Endothelial cell of umbilical vein (primary cell): ENCODE measurements at regions of chr12 and their contacts with region 1.

Region 1: GRCh38 chr12:89352492-89353187 is at the start of gene DUSP6:
- DNase-seq: peak; percentile 100
- H3K4me3 ChIP-seq: peak within 1 kb of the TSS; percentile 72 to 97 (median 90)
- H3K27ac ChIP-seq: peak within 1 kb of the TSS; percentile 88
- H3K4me1 ChIP-seq: peaks cover 37% of the 10 kb centered on the region
- H3K27me3 ChIP-seq: no peaks in the 10 kb centered on the region
- CTCF ChIP-seq: no peak
- POLR2A ChIP-seq: no peak
- total RNA-seq, gene DUSP6: 148 and 200 TPM in 2 replicates

Region 2: GRCh38 chr12:88946372-88946997 is 406.2 kb before region 1 on chr12:
- CTCF ChIA-PET with region 1: no interaction called
- POLR2A ChIA-PET with region 1: no interaction called
- dilution Hi-C with region 1: no loop called
- intact Hi-C with region 1: loop called (anchors 5 kb)
- DNase-seq: peak; percentile 89
- H3K4me3 ChIP-seq: no peak overlapping the region
- H3K27ac ChIP-seq: peak overlapping the region; percentile 92
- H3K4me1 ChIP-seq: peaks cover 42% of the 10 kb centered on the region
- H3K27me3 ChIP-seq: no peaks in the 10 kb centered on the region
- CTCF ChIP-seq: no peak
- POLR2A ChIP-seq: no peak

Region 3: DNA sequence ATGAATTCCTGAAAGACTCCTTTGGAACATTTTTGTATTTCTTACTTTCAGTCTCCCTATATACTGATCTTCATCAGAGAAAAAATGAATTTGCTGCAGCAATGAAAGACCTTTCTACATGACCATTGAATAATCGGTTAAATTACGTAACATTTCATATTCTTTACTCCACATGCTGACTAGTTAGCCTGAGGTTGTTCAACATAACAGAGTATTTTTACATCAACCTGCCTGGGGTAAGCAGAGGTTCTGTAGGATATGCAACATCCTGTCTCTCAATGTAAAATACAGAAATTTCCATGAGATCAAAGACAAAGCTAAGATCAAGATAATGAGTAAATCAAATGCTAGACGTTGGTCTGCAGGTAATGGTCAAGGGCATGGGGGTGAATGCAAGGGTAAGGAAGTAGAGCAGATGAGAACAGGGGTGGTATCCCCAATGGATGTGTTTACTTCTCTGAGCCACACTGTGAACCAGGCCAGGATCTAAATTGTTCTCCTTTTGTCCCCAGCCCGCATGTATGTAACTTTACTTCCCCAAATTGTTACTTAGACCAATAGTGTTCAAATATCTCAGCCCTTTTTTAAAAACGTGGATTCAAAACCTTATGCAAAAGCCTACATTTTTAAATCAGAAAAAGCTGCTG is 45.7 kb before region 1 on chr12:
- CTCF ChIA-PET with region 1: no interaction called
- POLR2A ChIA-PET with region 1: no interaction called
- dilution Hi-C with region 1: no loop called
- intact Hi-C with region 1: no loop called
- DNase-seq: no peak
- H3K4me3 ChIP-seq: no peak overlapping the region
- H3K27ac ChIP-seq: no peak overlapping the region
- H3K4me1 ChIP-seq: no peaks in the 10 kb centered on the region
- H3K27me3 ChIP-seq: no peaks in the 10 kb centered on the region
- CTCF ChIP-seq: no peak
- POLR2A ChIP-seq: no peak

Region 4: DNA sequence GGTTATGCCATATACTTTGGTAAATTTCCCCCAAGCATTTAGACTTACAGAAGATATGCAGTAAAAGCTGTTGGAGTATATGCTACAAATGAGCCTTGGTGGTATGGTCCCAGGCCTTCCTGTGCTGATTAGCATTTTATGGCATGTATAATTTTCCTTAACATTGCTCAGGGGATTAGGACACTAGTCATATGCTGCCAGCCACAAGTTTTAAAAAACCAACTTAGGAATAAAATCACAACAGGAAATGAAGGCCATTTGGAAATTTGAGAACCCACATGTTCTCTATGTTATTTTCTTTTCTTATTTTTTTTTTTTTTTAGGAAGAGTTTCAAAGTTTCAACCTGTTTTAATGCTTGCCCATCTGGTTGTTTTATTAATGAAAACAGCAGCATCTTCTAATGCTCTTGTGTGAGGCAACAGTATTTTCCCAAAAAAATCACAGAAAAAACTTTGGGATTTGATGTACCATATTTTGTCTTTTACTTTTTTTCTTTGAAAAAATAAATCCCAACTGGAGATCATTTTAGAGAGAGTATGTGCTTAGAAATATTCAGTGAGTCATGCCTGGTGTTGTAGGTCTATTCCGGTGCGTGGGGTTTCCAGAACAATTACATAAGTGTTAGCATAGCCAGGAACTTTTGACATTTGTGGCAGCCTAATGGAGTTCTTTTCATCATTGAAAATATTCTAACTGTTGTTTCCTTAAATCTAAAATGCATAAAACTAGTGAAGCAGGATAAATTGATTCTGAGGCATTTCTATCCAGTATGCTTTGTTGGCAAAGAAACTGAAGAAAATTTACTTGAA is 21.3 kb after region 1 on chr12:
- CTCF ChIA-PET with region 1: interaction called, 49 read pairs
- POLR2A ChIA-PET with region 1: interaction called, 9 read pairs
- dilution Hi-C with region 1: no loop called
- intact Hi-C with region 1: loop called (anchors 1 kb)
- DNase-seq: peak; percentile 90
- H3K4me3 ChIP-seq: no peak overlapping the region
- H3K27ac ChIP-seq: peak overlapping the region; percentile 90
- H3K4me1 ChIP-seq: peaks cover 78% of the 10 kb centered on the region
- H3K27me3 ChIP-seq: no peaks in the 10 kb centered on the region
- CTCF ChIP-seq: no peak
- POLR2A ChIP-seq: no peak

Region 5: DNA sequence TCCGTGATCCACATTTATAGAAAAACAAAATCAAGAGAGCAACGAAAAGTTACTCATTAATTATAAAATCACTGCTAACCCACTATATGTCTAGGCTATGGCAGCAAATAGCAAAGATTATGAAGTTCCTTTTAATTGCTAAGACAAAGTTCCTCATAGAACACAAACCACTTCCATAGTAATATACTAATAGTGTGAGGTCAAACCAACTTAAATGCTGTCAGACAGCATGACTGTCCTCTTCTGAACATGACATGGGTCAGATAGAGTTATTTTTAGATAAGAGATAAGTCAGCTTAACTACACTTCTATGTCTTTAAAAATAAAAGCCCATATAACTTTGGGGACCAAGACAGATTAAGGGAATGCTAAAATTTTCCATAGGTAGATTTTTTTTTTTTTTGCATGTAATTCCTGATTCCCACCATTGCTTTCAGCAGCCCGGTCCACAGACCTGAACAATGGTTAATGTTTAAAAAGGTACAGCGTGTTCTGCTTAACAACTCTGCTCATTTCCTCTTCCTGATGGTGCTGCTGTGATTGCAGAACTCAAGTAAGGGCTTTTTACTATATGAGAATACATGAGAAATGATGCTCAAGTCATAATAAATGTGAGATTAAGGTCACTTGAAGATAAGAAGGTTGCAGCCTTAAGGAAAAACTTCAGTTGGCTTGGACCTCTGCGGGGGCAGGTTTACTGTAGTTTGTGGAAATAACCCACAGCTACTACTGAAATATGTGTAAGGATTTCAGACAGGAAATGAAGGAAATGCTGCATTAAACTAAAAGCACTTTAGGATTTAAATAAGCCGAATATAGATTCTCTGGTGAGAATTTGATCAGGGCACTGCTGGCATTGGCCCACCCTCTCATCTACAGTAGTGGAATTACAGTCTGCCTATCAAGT is 37.4 kb after region 1 on chr12:
- CTCF ChIA-PET with region 1: interaction called, 5 read pairs
- POLR2A ChIA-PET with region 1: interaction called, 10 read pairs
- dilution Hi-C with region 1: no loop called
- intact Hi-C with region 1: loop called (anchors 1 kb)
- DNase-seq: peak; percentile 89
- H3K4me3 ChIP-seq: peak overlapping the region in 1 of 3 experiments; percentile 6
- H3K27ac ChIP-seq: peak overlapping the region; percentile 80
- H3K4me1 ChIP-seq: peaks cover 33% of the 10 kb centered on the region
- H3K27me3 ChIP-seq: no peaks in the 10 kb centered on the region
- CTCF ChIP-seq: no peak
- POLR2A ChIP-seq: no peak

Region 6: DNA sequence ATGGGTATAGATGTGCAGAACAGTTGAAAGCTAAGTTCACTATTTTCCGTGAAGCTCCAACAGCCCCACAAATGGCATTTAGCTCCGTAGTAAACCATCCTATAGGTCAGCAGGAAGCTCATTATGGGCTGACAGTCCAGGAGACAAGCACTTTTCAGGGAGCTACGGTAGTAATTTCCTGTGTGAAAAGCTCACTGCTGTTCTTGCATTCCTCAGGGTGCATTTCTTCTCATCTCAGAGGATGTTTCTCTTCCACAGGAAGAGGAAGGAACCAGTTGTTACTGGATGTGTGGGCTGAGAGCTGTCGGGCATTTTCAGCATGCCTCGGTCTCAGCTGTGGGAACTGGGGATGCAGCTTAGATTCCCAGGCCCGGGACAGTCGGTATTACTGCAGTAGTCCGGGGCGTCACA is 99.2 kb after region 1 on chr12:
- CTCF ChIA-PET with region 1: interaction called, 163 read pairs
- POLR2A ChIA-PET with region 1: interaction called, 34 read pairs
- dilution Hi-C with region 1: loop called (anchors 25 kb)
- intact Hi-C with region 1: loop called (anchors 1 kb)
- DNase-seq: peak; percentile 74
- H3K4me3 ChIP-seq: no peak overlapping the region
- H3K27ac ChIP-seq: peak overlapping the region; percentile 65
- H3K4me1 ChIP-seq: peaks cover 53% of the 10 kb centered on the region
- H3K27me3 ChIP-seq: no peaks in the 10 kb centered on the region
- CTCF ChIP-seq: no peak
- POLR2A ChIP-seq: peak; percentile 15

Region 7: DNA sequence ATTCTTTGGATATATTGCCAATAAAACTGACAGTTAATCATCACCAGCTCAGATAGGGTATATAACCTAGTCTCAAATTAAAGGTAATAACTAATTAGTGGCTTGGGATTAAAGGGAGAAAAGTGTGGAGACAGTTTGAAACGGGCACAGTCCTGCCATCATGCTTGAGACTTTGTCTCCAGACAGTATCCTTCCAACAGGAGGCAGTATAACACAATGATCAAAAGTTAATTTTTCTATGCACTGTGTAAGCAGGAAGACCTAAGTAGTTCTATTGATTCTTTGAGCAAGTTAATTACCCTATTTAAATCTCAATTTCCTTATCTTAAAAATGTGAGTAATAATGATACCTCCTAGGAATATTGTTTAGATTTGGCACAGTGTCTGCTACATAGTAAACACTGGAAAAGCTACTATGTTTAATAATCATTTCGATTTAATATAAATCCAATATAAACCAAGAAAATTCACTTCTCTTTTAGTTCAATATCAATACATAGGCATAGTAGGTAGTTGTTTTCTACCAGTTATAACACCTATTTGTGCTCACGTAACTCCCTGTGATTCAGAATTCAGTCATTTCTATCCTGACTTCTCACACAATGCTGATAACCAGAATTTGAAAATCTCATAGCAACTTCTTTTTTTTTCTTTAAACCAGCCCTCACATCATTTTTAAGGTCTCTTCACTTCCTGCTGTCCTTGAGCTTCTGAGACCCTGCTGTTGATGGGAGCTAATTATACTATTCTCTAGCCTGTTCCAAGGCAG is 118.3 kb after region 1 on chr12:
- CTCF ChIA-PET with region 1: interaction called, 12 read pairs
- POLR2A ChIA-PET with region 1: no interaction called
- dilution Hi-C with region 1: loop called (anchors 25 kb)
- intact Hi-C with region 1: no loop called
- DNase-seq: peak; percentile 73
- H3K4me3 ChIP-seq: no peak overlapping the region
- H3K27ac ChIP-seq: no peak overlapping the region
- H3K4me1 ChIP-seq: peaks cover 9% of the 10 kb centered on the region
- H3K27me3 ChIP-seq: no peaks in the 10 kb centered on the region
- CTCF ChIP-seq: peak; percentile 40 to 56
- POLR2A ChIP-seq: no peak

Region 8: DNA sequence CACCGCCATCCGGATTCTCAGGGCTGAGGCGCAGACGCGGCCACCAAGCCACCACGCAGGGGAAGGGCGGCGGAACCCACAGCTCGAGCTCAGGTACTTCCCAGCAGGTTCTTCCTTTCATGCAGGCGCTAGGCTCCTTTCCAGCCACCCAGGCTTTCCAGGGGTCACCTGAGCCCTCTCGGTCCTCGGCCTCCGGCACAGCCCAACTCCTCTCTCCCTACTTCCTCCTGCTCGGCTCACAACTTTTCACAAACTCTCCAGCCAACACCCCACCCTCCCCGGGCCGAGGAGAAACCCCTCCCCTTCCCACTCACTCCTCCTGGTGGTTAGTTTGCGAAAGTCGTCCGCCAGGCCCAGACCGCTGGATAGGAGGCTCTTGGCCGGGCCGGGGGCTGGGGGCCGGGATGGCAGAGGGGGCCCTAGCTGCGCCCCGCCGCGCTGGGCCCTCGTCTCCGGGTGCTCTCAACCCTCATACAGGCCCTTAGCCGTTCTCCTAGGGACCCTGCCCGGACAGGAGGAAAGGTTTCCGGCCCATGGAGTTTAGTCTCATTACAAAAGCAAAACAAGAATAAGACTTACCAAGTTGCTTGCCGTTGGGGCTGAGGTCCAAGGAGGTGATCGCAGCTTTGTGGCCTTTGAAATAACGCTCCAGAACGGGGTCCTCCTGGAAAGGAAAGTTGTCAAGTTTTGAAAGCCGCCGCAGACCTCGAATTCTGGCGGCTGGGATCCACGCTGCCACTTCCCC is 172.1 kb after region 1 on chr12 and contains the start of gene GALNT4:
- CTCF ChIA-PET with region 1: interaction called, 12 read pairs
- POLR2A ChIA-PET with region 1: no interaction called
- dilution Hi-C with region 1: no loop called
- intact Hi-C with region 1: loop called (anchors 1 kb)
- DNase-seq: peak; percentile 92
- H3K4me3 ChIP-seq: peak within 1 kb of the TSS; percentile 16 to 92 (median 59)
- H3K27ac ChIP-seq: peak within 1 kb of the TSS; percentile 35
- H3K4me1 ChIP-seq: peaks cover 32% of the 10 kb centered on the region
- H3K27me3 ChIP-seq: no peaks in the 10 kb centered on the region
- CTCF ChIP-seq: peak; percentile 40 to 82
- POLR2A ChIP-seq: peak; percentile 25
- total RNA-seq, gene GALNT4: 9.8 and 10.9 TPM in 2 replicates